ENCODE measurements at regions of chr6 and their contacts with region 1.

Region 1: DNA sequence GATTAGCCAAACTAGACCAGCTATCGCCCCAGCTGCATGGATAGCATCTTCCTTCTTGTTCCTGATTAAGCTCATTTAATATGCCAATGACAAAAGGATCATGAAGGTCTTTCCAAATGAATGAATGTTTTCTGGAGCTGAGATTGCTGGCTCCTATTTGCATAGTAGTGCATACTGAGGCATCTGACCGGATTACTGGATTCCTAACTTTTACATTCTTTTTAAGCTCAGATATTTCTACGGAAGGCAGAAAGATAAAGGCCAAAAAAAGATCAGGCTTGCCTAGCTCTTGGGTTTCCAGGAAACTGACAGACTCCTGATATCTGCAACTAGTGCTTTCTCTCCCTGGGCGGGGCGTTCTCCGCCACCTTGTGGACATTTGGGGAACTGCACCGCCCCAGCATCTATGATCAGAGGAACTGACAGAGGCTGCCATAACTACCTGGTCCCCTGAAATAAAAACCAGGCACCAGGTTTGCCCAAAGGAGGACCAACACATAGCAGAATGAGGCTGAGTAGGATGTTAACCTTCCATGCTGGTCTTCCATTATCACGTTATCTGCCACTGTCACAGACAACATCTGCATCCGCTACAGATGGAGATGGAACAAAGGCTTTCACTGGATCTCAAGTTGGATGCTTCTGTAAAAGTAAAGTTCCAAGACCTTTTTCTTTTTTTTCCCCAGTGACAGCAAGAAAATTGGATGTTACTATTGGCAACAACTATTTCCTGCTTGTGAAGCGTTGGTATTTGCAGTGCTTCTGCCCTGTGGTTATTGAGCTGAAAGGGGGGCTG is 33.2 kb downstream of the NT5E start:
- DNase-seq: peak; percentile 89
- ATAC-seq: peak; percentile 97
- H3K4me3 Mint-ChIP-seq: no peak overlapping the region
- H3K27ac Mint-ChIP-seq: peak overlapping the region; percentile 6
- H3K4me1 Mint-ChIP-seq: peaks cover 16% of the 10 kb centered on the region
- H3K27me3 Mint-ChIP-seq: no peaks in the 10 kb centered on the region

Region 2: GRCh38 chr6:85354761-85355618 is 128.1 kb before region 1 on chr6:
- CTCF ChIA-PET with region 1: interaction called, 97 read pairs
- DNase-seq: peak; percentile 75
- ATAC-seq: peak; percentile 85
- H3K4me3 Mint-ChIP-seq: no peak overlapping the region
- H3K27ac Mint-ChIP-seq: no peak overlapping the region
- H3K4me1 Mint-ChIP-seq: no peaks in the 10 kb centered on the region
- H3K27me3 Mint-ChIP-seq: peaks cover 3% of the 10 kb centered on the region

Region 3: GRCh38 chr6:85403331-85404015 is 79.6 kb before region 1 on chr6:
- CTCF ChIA-PET with region 1: interaction called, 10 read pairs
- DNase-seq: no peak
- ATAC-seq: no peak
- H3K4me3 Mint-ChIP-seq: no peak overlapping the region
- H3K27ac Mint-ChIP-seq: peak overlapping the region; percentile 70
- H3K4me1 Mint-ChIP-seq: peaks cover 67% of the 10 kb centered on the region
- H3K27me3 Mint-ChIP-seq: no peaks in the 10 kb centered on the region

Region 4: DNA sequence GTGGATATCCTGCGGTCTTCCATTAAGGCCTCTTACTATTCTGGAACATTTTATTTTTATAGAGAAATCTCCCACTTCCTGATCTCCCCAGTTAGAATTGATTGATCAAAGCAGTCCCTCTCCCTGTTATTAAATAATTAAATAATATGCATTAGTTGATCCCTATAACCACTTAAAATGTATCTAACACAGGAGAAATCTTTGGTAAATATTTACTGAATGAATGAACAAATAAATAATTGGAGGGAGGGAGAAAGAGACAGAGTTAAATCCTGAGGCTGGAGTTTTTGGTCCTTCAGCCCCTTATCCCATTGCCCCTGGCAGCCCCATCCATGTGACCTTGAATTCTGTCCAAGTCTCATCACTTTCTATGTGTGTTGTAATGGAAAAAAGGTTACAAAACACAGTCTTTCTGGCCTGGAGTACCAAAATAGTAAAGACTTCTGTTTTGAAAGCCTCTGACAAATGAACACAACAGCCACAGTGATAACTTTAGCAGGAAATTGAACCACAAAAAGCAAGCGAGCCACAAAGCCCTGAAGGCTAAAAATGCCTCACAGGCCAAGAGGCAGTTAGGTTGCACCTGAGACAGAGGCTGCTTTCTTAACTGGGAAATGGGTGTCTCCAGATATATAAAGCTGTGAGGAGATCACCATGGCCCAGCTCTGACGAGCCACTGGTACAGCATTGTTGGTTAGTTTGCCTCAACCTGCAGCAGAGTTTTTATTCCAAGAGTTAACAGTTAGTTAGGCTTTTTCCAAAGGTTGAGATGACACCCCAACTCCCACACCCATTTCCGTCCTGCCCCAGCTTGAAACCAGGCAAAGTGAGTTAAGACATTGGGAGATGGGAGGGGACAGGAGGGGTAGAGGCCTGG is 21.9 kb before region 1 on chr6:
- CTCF ChIA-PET with region 1: interaction called, 59 read pairs
- DNase-seq: peak; percentile 88
- ATAC-seq: peak; percentile 74
- H3K4me3 Mint-ChIP-seq: peak overlapping the region; percentile 41
- H3K27ac Mint-ChIP-seq: peak overlapping the region; percentile 84
- H3K4me1 Mint-ChIP-seq: peaks cover 96% of the 10 kb centered on the region
- H3K27me3 Mint-ChIP-seq: peaks cover 2% of the 10 kb centered on the region

Region 5: DNA sequence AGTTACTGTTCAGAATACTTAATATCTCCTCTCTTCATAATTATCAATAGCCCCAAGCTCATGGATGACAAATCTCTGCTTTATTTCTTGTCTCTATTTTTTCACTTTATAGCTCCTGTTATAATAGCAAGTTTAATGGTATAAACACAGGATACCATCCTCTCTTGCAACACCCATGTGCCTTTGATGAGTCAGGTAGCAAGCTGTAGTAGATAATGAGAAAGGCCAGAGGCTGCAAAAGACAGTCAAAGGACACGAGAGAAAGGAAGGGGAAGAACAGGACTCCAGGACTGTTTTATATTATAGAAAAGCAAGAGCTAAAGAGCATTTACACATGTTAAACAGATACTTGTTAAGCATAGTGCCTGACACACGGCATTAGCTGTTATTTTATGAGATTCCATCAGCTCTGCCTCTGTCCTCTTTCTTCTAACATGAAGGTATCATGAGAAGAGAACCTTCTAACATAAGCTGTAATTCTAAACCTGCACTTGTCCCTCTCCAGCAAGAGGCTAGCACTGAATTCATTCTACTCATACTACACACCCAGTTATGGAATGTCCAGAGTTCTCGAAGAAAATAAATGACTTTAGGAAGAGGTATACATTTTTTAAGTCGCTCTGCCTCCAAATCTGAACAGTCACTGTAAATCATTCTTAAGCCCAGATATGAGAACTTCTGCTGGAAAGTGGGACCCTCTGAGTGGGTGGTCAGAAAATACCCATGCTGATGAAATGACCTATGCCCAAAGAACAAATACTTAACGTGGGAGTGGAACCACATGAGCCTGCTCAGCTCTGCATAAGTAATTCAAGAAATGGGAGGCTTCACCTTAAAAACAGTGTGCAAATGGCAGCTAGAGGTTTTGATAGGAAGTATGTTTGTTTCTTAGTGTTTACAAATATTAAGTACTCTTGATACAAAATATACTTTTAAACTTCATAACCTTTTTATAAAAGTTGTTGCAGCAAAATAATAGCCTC is 11.7 kb after region 1 on chr6:
- CTCF ChIA-PET with region 1: interaction called, 20 read pairs
- DNase-seq: no peak
- ATAC-seq: no peak
- H3K4me3 Mint-ChIP-seq: no peak overlapping the region
- H3K27ac Mint-ChIP-seq: no peak overlapping the region
- H3K4me1 Mint-ChIP-seq: peaks cover 32% of the 10 kb centered on the region
- H3K27me3 Mint-ChIP-seq: no peaks in the 10 kb centered on the region

Measured in activated CD8-positive, alpha-beta memory T cell treated with anti-CD3 and anti-CD28 coated beads, Interleukin-2, amount 10 ng/mL, durations not matched to agents 7 days and 5 days (primary cell).